Mammary epithelial cell (primary cell): ENCODE measurements at regions of chr3 and their contacts with region 1.

Region 1: GRCh38 chr3:151305101-151305750 is 11.4 kb downstream of the GPR87 start:
- DNase-seq: peak; percentile 99
- H3K4me3 ChIP-seq: peak overlapping the region; percentile 10 to 23 (median 20)
- H3K27ac ChIP-seq: peak overlapping the region; percentile 97
- H3K4me1 ChIP-seq: peaks cover 88% of the 10 kb centered on the region
- H3K27me3 ChIP-seq: no peaks in the 10 kb centered on the region
- CTCF ChIP-seq: peak in 1 of 2 donors; percentile 36

Region 2: GRCh38 chr3:151316267-151316991 is 11.2 kb after region 1 on chr3 and contains the start of gene GPR87:
- CTCF ChIA-PET with region 1: interaction called, 6 read pairs
- dilution Hi-C with region 1: no loop called
- in situ Hi-C with region 1: no loop called
- intact Hi-C with region 1: loop called (anchors 1 kb)
- DNase-seq: peak; percentile 95
- H3K4me3 ChIP-seq: peak within 1 kb of the TSS; percentile 63 to 91 (median 89)
- H3K27ac ChIP-seq: peak within 1 kb of the TSS; percentile 99
- H3K4me1 ChIP-seq: peaks cover 64% of the 10 kb centered on the region
- H3K27me3 ChIP-seq: no peaks in the 10 kb centered on the region
- CTCF ChIP-seq: no peak
- total RNA-seq, gene GPR87: 66.1 to 78.7 TPM